ENCODE measurements at regions of chr6 and their contacts with region 1.

Region 1: GRCh38 chr6:149028767-149029405 is 282.1 kb downstream of the UST start:
- DNase-seq: peak in 1 of 2 donors; percentile 66
- H3K4me3 ChIP-seq: no peak overlapping the region
- CTCF ChIP-seq: peak in 1 of 3 donors; percentile 38
- POLR2A ChIP-seq: no peak

Region 2: GRCh38 chr6:149431905-149432775 is 403.3 kb after region 1 on chr6:
- intact Hi-C with region 1: loop called (anchors 10 kb)
- DNase-seq: peak; percentile 90 to 98
- H3K4me3 ChIP-seq: no peak overlapping the region
- CTCF ChIP-seq: peak in 1 of 3 donors; percentile 90
- POLR2A ChIP-seq: no peak

Region 3: DNA sequence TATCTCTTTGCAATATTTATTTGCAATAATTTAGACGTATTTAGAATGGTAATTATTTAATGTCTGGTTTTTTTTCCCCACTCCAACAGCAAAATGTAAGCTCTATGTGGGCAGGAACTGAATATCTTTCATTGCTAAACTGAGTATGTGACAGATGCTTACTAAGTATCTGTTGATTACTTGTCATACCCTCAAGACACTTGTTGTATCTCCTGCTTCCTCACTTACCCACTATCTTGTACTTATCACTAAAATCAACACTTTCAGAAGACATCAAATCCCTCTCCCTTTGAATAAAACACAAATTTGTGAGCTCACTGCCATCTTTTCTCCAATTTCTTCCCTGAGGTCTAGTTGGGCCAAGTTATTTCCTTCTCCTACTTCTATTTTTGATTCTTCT is 486.6 kb after region 1 on chr6:
- intact Hi-C with region 1: loop called (anchors 5 kb)
- DNase-seq: no peak
- H3K4me3 ChIP-seq: no peak overlapping the region
- CTCF ChIP-seq: no peak
- POLR2A ChIP-seq: no peak

Measured in lower leg skin (tissue), 4 donors.